ENCODE measurements at regions of chr16 and their contacts with region 1.

Region 1: GRCh38 chr16:24681809-24682511 is 47.5 kb upstream of the TNRC6A start:
- DNase-seq: peak; percentile 25 to 94
- H3K4me3 ChIP-seq: peak overlapping the region; percentile 13; the same call in 1 of the 2 replicates
- H3K27ac ChIP-seq: peak overlapping the region; percentile 96
- H3K4me1 ChIP-seq: peaks cover 25% of the 10 kb centered on the region
- H3K27me3 ChIP-seq: no peaks in the 10 kb centered on the region
- CTCF ChIP-seq: no peak

Region 2: DNA sequence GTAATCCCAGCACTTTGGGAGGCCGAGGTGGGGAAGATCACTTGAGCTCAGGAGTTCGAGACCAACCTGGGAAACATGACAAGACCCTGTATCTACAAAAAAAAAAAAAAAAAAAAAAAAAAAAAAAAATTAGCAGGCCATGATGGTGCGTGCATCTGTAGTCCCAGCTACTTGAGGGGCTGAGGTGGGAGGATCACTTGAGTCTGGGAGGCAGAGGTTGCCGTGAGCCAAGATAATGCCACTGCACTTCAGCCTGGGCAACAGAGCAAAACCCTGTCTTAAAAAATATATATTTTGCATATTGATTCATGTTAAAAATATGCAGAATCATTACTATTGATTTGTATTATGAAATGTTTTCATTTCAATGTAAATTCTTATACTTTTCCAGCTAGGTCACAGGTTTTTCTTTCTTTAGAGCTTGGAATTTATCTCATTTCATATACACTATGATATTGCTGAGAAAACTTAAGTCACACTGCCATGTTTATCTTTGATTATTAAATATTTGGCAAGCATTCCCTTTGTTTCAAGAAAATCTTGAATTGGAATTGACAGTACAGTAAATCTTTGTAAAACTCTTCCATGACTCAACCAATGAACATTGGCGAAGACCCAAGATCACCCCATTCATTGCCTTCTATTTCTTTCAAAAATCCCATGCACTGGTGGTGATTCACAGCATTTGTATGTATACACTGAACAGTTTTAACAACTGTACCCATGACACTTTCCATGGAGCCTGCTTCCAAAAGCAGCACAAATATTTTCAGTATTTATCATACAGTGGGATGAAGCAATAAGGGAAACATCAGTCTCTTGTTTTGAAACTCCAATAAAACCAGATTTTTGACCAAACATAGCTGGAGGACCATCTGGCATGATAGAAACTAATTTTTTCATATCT is 36.0 kb before region 1 on chr16:
- CTCF ChIA-PET with region 1: no interaction called
- POLR2A ChIA-PET with region 1: no interaction called
- intact Hi-C with region 1: loop called (anchors 1 kb)
- DNase-seq: peak; percentile 81 to 99
- H3K4me3 ChIP-seq: no peak overlapping the region
- H3K27ac ChIP-seq: peak overlapping the region; percentile 93
- H3K4me1 ChIP-seq: peaks cover 36% of the 10 kb centered on the region
- H3K27me3 ChIP-seq: no peaks in the 10 kb centered on the region
- CTCF ChIP-seq: no peak

Region 3: GRCh38 chr16:24652209-24652712 is 29.7 kb before region 1 on chr16:
- CTCF ChIA-PET with region 1: interaction called, 12 read pairs
- POLR2A ChIA-PET with region 1: interaction called, 5 read pairs
- intact Hi-C with region 1: no loop called
- DNase-seq: no peak
- H3K4me3 ChIP-seq: no peak overlapping the region
- H3K27ac ChIP-seq: no peak overlapping the region
- H3K4me1 ChIP-seq: peaks cover 8% of the 10 kb centered on the region
- H3K27me3 ChIP-seq: no peaks in the 10 kb centered on the region
- CTCF ChIP-seq: no peak

Region 4: GRCh38 chr16:24700549-24701392 is 18.8 kb after region 1 on chr16:
- CTCF ChIA-PET with region 1: no interaction called
- POLR2A ChIA-PET with region 1: interaction called, 17 read pairs
- intact Hi-C with region 1: no loop called
- DNase-seq: peak; percentile 90 to 95
- H3K4me3 ChIP-seq: peak overlapping the region; percentile 36; the same call in 1 of the 2 replicates
- H3K27ac ChIP-seq: peak overlapping the region; percentile 91
- H3K4me1 ChIP-seq: peaks cover 34% of the 10 kb centered on the region
- H3K27me3 ChIP-seq: no peaks in the 10 kb centered on the region
- CTCF ChIP-seq: peak; percentile 47

Region 5: DNA sequence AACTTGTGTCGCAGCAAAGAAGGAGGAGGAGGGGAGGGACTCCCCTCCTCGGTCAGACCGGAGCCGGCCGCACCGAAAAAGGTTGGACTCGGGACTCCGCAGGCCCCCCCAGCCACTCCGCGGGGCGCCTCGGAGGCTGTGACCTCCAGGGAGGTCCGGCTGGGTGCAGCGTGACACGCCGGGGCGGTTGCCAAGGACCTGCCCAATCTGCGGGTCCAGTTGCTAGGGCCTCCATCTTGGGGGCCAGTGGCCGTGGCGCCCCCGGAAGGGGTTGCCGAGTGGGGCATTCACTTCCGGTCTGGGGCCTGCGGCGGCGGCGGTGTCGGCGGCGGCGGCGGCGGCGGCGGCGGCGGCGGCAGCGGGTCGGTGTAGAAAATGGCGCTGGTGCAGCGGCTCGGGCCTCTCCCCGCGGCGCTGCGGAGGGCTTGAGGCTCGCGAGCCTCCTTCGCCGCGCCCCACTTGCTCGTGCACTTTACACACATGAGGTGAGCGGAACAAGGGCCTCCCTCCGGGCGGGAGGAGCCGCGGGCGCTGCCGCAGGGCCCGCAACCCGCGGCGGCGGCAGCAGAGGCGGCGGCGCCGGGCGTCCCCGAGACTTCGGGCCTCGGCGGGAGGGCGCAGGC is 47.5 kb after region 1 on chr16 and contains the start of gene TNRC6A:
- CTCF ChIA-PET with region 1: interaction called, 6 read pairs
- POLR2A ChIA-PET with region 1: interaction called, 10 read pairs
- intact Hi-C with region 1: no loop called
- DNase-seq: peak; percentile 77 to 94
- H3K4me3 ChIP-seq: peak within 1 kb of the TSS; percentile 83
- H3K27ac ChIP-seq: peak within 1 kb of the TSS; percentile 69
- H3K4me1 ChIP-seq: peaks cover 33% of the 10 kb centered on the region
- H3K27me3 ChIP-seq: no peaks in the 10 kb centered on the region
- CTCF ChIP-seq: no peak
- total RNA-seq, gene TNRC6A: 66.8 and 84.8 TPM in 2 replicates

Region 6: GRCh38 chr16:24758373-24758772 is 76.4 kb after region 1 on chr16:
- CTCF ChIA-PET with region 1: interaction called, 10 read pairs
- POLR2A ChIA-PET with region 1: no interaction called
- intact Hi-C with region 1: no loop called
- DNase-seq: no peak
- H3K4me3 ChIP-seq: no peak overlapping the region
- H3K27ac ChIP-seq: no peak overlapping the region
- H3K4me1 ChIP-seq: no peaks in the 10 kb centered on the region
- H3K27me3 ChIP-seq: no peaks in the 10 kb centered on the region
- CTCF ChIP-seq: no peak